Naive thymus-derived CD4-positive, alpha-beta T cell (primary cell): ENCODE measurements at regions of chr3 and their contacts with region 1.

Region 1: GRCh38 chr3:30353711-30354467 is 252.5 kb upstream of the TGFBR2 start:
- DNase-seq: peak; percentile 5 to 94 (median 87)
- ATAC-seq: peak; percentile 99
- H3K4me3 ChIP-seq: peak overlapping the region; percentile 36
- H3K4me3 Mint-ChIP-seq: peak overlapping the region; percentile 65 to 81 (median 68)
- H3K27ac ChIP-seq: no peak overlapping the region
- H3K27ac Mint-ChIP-seq: peak overlapping the region; percentile 23 to 96 (median 90)
- H3K4me1 ChIP-seq: peaks cover 38 to 66% of the 10 kb centered on the region in 2 donors
- H3K4me1 Mint-ChIP-seq: peaks cover 50 to 96% (median 88%) of the 10 kb centered on the region in 7 donors
- H3K27me3 ChIP-seq: no peaks in the 10 kb centered on the region
- H3K27me3 Mint-ChIP-seq: peaks cover 0 to 50% (median 0%) of the 10 kb centered on the region in 5 donors

Region 2: GRCh38 chr3:30199096-30199759 is 154.7 kb before region 1 on chr3:
- CTCF ChIA-PET with region 1: no interaction called
- POLR2A ChIA-PET with region 1: interaction called, 4 read pairs
- intact Hi-C with region 1: loop called in 1 of 2 experiments (anchors 1 kb)
- DNase-seq: peak; percentile 25 to 66 (median 58)
- ATAC-seq: peak; percentile 61
- H3K4me3 ChIP-seq: no peak overlapping the region
- H3K4me3 Mint-ChIP-seq: no peak overlapping the region
- H3K27ac ChIP-seq: no peak overlapping the region
- H3K27ac Mint-ChIP-seq: no peak overlapping the region
- H3K4me1 ChIP-seq: no peaks in the 10 kb centered on the region
- H3K4me1 Mint-ChIP-seq: peaks cover 0 to 7% (median 4%) of the 10 kb centered on the region in 7 donors
- H3K27me3 ChIP-seq: no peaks in the 10 kb centered on the region
- H3K27me3 Mint-ChIP-seq: peaks cover 0 to 6% (median 0%) of the 10 kb centered on the region in 5 donors

Region 3: GRCh38 chr3:30299674-30300385 is 54.1 kb before region 1 on chr3:
- CTCF ChIA-PET with region 1: no interaction called
- POLR2A ChIA-PET with region 1: no interaction called
- intact Hi-C with region 1: no loop called
- DNase-seq: no peak
- ATAC-seq: no peak
- H3K4me3 ChIP-seq: no peak overlapping the region
- H3K4me3 Mint-ChIP-seq: peak overlapping the region in 1 of 10 donors; percentile 8
- H3K27ac ChIP-seq: no peak overlapping the region
- H3K27ac Mint-ChIP-seq: no peak overlapping the region
- H3K4me1 ChIP-seq: no peaks in the 10 kb centered on the region
- H3K4me1 Mint-ChIP-seq: peaks cover 0 to 13% (median 7%) of the 10 kb centered on the region in 7 donors
- H3K27me3 ChIP-seq: no peaks in the 10 kb centered on the region
- H3K27me3 Mint-ChIP-seq: peaks cover 0 to 5% (median 0%) of the 10 kb centered on the region in 5 donors

Region 4: GRCh38 chr3:30319713-30320112 is 34.2 kb before region 1 on chr3:
- CTCF ChIA-PET with region 1: interaction called, 7 read pairs
- POLR2A ChIA-PET with region 1: interaction called, 3 read pairs
- intact Hi-C with region 1: loop called (anchors 1 kb)
- DNase-seq: peak in 7 of 9 donors; percentile 32 to 72 (median 63)
- ATAC-seq: peak; percentile 90
- H3K4me3 ChIP-seq: no peak overlapping the region
- H3K4me3 Mint-ChIP-seq: peak overlapping the region in 4 of 10 donors; percentile 0 to 7 (median 4)
- H3K27ac ChIP-seq: no peak overlapping the region
- H3K27ac Mint-ChIP-seq: peak overlapping the region in 6 of 9 donors; percentile 1 to 60 (median 43)
- H3K4me1 ChIP-seq: peaks cover 0 to 15% of the 10 kb centered on the region in 2 donors
- H3K4me1 Mint-ChIP-seq: peaks cover 3 to 36% (median 20%) of the 10 kb centered on the region in 7 donors
- H3K27me3 ChIP-seq: no peaks in the 10 kb centered on the region
- H3K27me3 Mint-ChIP-seq: no peaks in the 10 kb centered on the region

Region 5: GRCh38 chr3:30368978-30369377 is 15.1 kb after region 1 on chr3:
- CTCF ChIA-PET with region 1: no interaction called
- POLR2A ChIA-PET with region 1: no interaction called
- intact Hi-C with region 1: loop called in 1 of 2 experiments (anchors 2 kb)
- DNase-seq: no peak
- ATAC-seq: no peak
- H3K4me3 ChIP-seq: no peak overlapping the region
- H3K4me3 Mint-ChIP-seq: no peak overlapping the region
- H3K27ac ChIP-seq: no peak overlapping the region
- H3K27ac Mint-ChIP-seq: no peak overlapping the region
- H3K4me1 ChIP-seq: no peaks in the 10 kb centered on the region
- H3K4me1 Mint-ChIP-seq: peaks cover 0 to 19% (median 6%) of the 10 kb centered on the region in 7 donors
- H3K27me3 ChIP-seq: no peaks in the 10 kb centered on the region
- H3K27me3 Mint-ChIP-seq: peaks cover 0 to 5% (median 0%) of the 10 kb centered on the region in 5 donors

Region 6: DNA sequence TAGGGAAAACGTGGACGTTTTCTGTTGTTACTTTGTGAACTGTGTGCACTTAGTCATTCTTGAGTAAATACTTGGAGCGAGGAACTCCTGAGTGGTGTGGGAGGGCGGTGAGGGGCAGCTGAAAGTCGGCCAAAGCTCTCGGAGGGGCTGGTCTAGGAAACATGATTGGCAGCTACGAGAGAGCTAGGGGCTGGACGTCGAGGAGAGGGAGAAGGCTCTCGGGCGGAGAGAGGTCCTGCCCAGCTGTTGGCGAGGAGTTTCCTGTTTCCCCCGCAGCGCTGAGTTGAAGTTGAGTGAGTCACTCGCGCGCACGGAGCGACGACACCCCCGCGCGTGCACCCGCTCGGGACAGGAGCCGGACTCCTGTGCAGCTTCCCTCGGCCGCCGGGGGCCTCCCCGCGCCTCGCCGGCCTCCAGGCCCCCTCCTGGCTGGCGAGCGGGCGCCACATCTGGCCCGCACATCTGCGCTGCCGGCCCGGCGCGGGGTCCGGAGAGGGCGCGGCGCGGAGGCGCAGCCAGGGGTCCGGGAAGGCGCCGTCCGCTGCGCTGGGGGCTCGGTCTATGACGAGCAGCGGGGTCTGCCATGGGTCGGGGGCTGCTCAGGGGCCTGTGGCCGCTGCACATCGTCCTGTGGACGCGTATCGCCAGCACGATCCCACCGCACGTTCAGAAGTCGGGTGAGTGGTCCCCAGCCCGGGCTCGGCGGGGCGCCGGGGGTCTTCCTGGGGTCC is 252.6 kb after region 1 on chr3 and contains the start of gene TGFBR2:
- CTCF ChIA-PET with region 1: no interaction called
- POLR2A ChIA-PET with region 1: interaction called, 12 read pairs
- intact Hi-C with region 1: loop called (anchors 2 kb)
- DNase-seq: peak; percentile 57 to 85 (median 69)
- ATAC-seq: peak; percentile 84
- H3K4me3 ChIP-seq: peak within 1 kb of the TSS; percentile 76
- H3K4me3 Mint-ChIP-seq: peak within 1 kb of the TSS; percentile 88 to 100 (median 99)
- H3K27ac ChIP-seq: peak within 1 kb of the TSS; percentile 91
- H3K27ac Mint-ChIP-seq: peak within 1 kb of the TSS; percentile 93 to 100 (median 98)
- H3K4me1 ChIP-seq: peaks cover 32 to 39% of the 10 kb centered on the region in 2 donors
- H3K4me1 Mint-ChIP-seq: peaks cover 45 to 68% (median 55%) of the 10 kb centered on the region in 7 donors
- H3K27me3 ChIP-seq: no peaks in the 10 kb centered on the region
- H3K27me3 Mint-ChIP-seq: no peaks in the 10 kb centered on the region
- total RNA-seq, gene TGFBR2: 63.0 to 171 (median 155) TPM

Region 7: DNA sequence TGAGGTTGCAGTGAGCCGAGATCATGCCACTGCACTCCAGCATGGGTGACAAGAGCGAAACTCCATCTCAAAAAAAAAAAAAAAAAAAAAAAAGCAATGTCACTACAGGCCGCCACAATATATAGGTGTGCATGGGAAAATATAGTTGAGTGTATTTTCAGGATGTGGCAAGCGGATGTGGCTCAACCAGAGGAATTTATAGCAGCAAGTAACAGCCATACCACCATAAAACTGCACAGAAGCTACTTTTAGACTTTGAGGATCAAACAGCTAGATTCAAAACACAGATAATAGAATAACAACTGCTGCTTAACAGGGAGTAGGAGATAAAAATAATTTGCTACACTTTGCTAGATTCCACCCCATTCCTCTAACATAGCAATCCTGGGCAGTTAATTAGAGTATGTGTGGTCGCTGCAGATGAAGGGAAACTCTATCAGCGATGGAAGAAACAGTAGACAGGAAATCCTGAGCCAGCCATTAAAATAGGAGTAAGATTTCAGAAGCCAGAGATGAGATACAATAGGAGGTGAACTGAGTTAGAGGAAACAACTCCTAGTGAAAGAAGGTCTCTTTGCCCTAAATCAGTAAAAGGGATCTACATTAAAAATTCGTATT is 860.1 kb after region 1 on chr3:
- CTCF ChIA-PET with region 1: no interaction called
- POLR2A ChIA-PET with region 1: no interaction called
- intact Hi-C with region 1: loop called (anchors 5 to 10 kb)
- DNase-seq: peak in 7 of 9 donors; percentile 57 to 86 (median 76)
- ATAC-seq: peak; percentile 86
- H3K4me3 ChIP-seq: no peak overlapping the region
- H3K4me3 Mint-ChIP-seq: peak overlapping the region; percentile 34 to 82 (median 69)
- H3K27ac ChIP-seq: no peak overlapping the region
- H3K27ac Mint-ChIP-seq: peak overlapping the region; percentile 26 to 89 (median 64)
- H3K4me1 ChIP-seq: peaks cover 48 to 49% of the 10 kb centered on the region in 2 donors
- H3K4me1 Mint-ChIP-seq: peaks cover 53 to 99% (median 98%) of the 10 kb centered on the region in 7 donors
- H3K27me3 ChIP-seq: no peaks in the 10 kb centered on the region
- H3K27me3 Mint-ChIP-seq: peaks cover 0 to 2% (median 0%) of the 10 kb centered on the region in 5 donors

Region 8: DNA sequence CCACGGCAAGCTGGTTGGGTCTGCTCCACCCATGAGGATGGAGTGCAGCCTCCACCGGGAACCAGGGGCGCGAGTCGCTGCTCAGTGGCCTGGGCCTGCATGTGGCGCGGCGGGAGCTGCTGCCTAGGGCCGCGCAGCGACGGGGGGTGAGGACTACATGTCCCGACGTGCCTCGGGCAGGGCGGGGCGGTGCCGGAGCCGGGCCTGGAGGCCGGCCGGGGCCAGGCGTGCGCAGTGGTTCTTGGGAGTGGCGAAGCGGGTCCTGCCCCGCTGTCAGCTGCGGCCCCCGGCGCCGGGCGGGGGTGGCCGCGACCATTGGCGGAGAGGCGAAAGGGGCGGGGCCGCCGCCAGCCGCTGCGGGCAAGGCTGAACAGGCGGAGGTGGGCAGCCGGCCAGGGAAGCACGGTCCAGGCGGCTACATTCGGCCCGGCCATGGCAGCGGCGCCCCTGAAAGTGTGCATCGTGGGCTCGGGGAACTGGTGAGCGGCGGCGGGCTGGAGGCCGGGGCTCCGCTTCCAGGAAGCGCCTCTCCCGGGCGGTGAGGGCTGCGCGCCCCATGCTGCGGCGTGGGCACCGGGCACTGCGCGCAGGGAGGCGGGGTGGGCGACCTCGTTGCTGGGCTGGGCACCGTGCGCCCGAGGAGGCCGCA is 1752.5 kb after region 1 on chr3 and contains the start of gene GPD1L:
- CTCF ChIA-PET with region 1: no interaction called
- POLR2A ChIA-PET with region 1: no interaction called
- intact Hi-C with region 1: loop called in 1 of 2 experiments (anchors 10 kb)
- DNase-seq: peak; percentile 75 to 96 (median 86)
- ATAC-seq: peak; percentile 99
- H3K4me3 ChIP-seq: peak within 1 kb of the TSS; percentile 77
- H3K4me3 Mint-ChIP-seq: peak within 1 kb of the TSS; percentile 86 to 97 (median 94)
- H3K27ac ChIP-seq: peak within 1 kb of the TSS; percentile 68
- H3K27ac Mint-ChIP-seq: peak within 1 kb of the TSS; percentile 77 to 96 (median 82)
- H3K4me1 ChIP-seq: peaks cover 14 to 15% of the 10 kb centered on the region in 2 donors
- H3K4me1 Mint-ChIP-seq: peaks cover 14 to 44% (median 39%) of the 10 kb centered on the region in 7 donors
- H3K27me3 ChIP-seq: no peaks in the 10 kb centered on the region
- H3K27me3 Mint-ChIP-seq: no peaks in the 10 kb centered on the region
- total RNA-seq, gene GPD1L: 14.1 to 23.8 (median 21.4) TPM